ENCODE measurements at regions of chr10 and their contacts with region 1.

Region 1: GRCh38 chr10:43913676-43914385 is 265.1 kb upstream of the ZNF32 start:
- DNase-seq: no peak
- H3K4me3 ChIP-seq: no peak overlapping the region
- H3K27ac ChIP-seq: no peak overlapping the region
- H3K4me1 ChIP-seq: no peaks in the 10 kb centered on the region
- H3K27me3 ChIP-seq: peaks cover 16% of the 10 kb centered on the region
- CTCF ChIP-seq: no peak

Region 2: GRCh38 chr10:43749145-43749576 is 164.7 kb before region 1 on chr10:
- CTCF ChIA-PET with region 1: no interaction called
- POLR2A ChIA-PET with region 1: no interaction called
- intact Hi-C with region 1: loop called (anchors 10 kb)
- DNase-seq: no peak
- H3K4me3 ChIP-seq: no peak overlapping the region
- H3K27ac ChIP-seq: no peak overlapping the region
- H3K4me1 ChIP-seq: no peaks in the 10 kb centered on the region
- H3K27me3 ChIP-seq: peaks cover 71% of the 10 kb centered on the region
- CTCF ChIP-seq: no peak

Region 3: GRCh38 chr10:43808136-43808535 is 105.7 kb before region 1 on chr10:
- CTCF ChIA-PET with region 1: no interaction called
- POLR2A ChIA-PET with region 1: no interaction called
- intact Hi-C with region 1: no loop called
- DNase-seq: no peak
- H3K4me3 ChIP-seq: no peak overlapping the region
- H3K27ac ChIP-seq: no peak overlapping the region
- H3K4me1 ChIP-seq: no peaks in the 10 kb centered on the region
- H3K27me3 ChIP-seq: peaks cover 30% of the 10 kb centered on the region
- CTCF ChIP-seq: no peak

Measured in PC-9 (cell line).